T-cell (primary cell): ENCODE measurements at regions of chr3 and their contacts with region 1.

Region 1: DNA sequence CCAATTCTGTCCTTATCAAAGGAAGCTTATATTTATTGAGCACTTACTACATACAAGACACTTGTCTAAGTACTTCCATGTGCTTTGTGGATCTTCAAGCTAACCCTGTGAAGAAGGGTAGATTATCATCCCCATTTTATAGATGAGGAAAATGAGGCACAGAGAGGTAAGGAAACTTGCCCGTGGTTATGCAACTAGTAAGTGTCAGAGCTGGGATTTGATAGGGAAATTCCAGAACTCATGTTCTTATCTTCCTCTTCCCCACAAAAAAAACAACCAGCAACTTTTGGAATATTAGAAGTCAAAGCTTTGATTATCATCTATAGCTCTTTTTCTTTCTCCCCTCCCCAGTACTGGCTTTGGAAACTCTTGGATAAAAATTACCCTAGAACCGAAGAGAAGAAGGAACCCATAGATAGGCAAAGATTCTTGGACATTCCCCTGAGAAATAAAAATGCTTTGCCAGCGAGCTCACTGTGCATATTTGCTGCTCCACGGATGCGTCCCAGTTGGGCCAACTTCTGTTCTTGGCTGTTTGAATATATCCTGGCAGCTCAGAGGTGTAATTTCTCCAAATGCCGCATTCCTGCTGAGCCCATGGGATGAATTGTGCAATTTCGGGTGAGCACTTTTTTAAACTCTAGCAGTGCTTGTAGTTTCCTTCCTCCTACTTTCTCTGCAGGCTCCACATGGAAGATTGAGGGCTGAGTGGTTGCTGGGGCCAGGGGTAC is 591.5 kb upstream of the CFAP20DC start:
- DNase-seq: no peak
- ATAC-seq: no peak
- H3K4me3 ChIP-seq: no peak overlapping the region
- H3K4me3 Mint-ChIP-seq: no peak overlapping the region
- H3K27ac ChIP-seq: no peak overlapping the region
- H3K27ac Mint-ChIP-seq: no peak overlapping the region
- H3K4me1 ChIP-seq: no peaks in the 10 kb centered on the region
- H3K4me1 Mint-ChIP-seq: no peaks in the 10 kb centered on the region
- H3K27me3 ChIP-seq: peaks cover 0 to 4% of the 10 kb centered on the region in 2 experiments
- H3K27me3 Mint-ChIP-seq: peaks cover 7 to 14% of the 10 kb centered on the region in 2 donors

Region 2: GRCh38 chr3:58502872-58503271 is 1138.5 kb before region 1 on chr3:
- CTCF ChIA-PET with region 1: no interaction called
- POLR2A ChIA-PET with region 1: interaction called in 1 of 2 experiments, 10 read pairs
- DNase-seq: no peak
- ATAC-seq: no peak
- H3K4me3 ChIP-seq: no peak overlapping the region
- H3K4me3 Mint-ChIP-seq: no peak overlapping the region
- H3K27ac ChIP-seq: no peak overlapping the region
- H3K27ac Mint-ChIP-seq: no peak overlapping the region
- H3K4me1 ChIP-seq: no peaks in the 10 kb centered on the region
- H3K4me1 Mint-ChIP-seq: peaks cover 14 to 16% (median 14%) of the 10 kb centered on the region in 3 donors
- H3K27me3 ChIP-seq: no peaks in the 10 kb centered on the region
- H3K27me3 Mint-ChIP-seq: no peaks in the 10 kb centered on the region